ENCODE measurements at regions of chr5 and their contacts with region 1.

Region 1: GRCh38 chr5:72847989-72848473 is 31.6 kb downstream of the TNPO1 start:
- DNase-seq: peak; percentile 59 to 91 (median 82)
- ATAC-seq: peak; percentile 81
- H3K4me3 ChIP-seq: peak overlapping the region; percentile 84 to 89
- H3K4me3 Mint-ChIP-seq: peak overlapping the region; percentile 99
- H3K27ac ChIP-seq: peak overlapping the region; percentile 79 to 81
- H3K27ac Mint-ChIP-seq: peak overlapping the region; percentile 98
- H3K4me1 ChIP-seq: peaks cover 29% of the 10 kb centered on the region
- H3K4me1 Mint-ChIP-seq: peaks cover 61% of the 10 kb centered on the region
- H3K27me3 ChIP-seq: no peaks in the 10 kb centered on the region
- H3K27me3 Mint-ChIP-seq: no peaks in the 10 kb centered on the region
- CTCF ChIP-seq: no peak

Region 2: DNA sequence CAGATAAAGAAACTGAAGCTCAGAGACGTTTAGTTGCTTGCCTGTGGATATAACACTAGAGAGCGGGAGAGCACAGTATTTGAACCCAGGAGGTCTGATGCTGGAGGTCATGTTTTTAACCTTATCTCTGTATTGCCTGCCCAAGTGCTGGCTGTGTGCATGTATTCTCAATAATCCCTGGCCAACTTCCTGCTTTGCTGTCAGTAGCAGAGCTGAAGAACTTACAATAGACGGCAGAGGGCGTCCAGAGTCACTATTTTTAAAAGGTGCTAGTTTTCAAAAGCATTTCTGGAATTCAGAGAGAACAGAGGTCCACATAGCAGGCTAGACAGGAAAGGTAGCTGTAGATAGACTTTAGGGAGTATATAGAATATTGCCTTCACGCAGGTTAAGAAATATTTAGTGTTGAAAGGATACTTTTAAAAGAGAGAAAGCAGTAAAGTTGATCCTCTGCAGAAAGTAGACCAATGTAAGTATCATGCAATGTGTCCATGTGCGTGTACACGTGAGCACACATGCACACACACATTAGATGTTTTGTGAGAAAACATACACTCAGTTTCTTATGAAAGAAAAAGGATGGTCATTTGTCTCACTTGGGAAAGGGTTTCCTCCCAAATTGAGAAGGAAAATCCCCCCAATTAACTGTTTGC is 481.6 kb before region 1 on chr5:
- CTCF ChIA-PET with region 1: no interaction called
- POLR2A ChIA-PET with region 1: no interaction called
- intact Hi-C with region 1: loop called in 1 of 2 experiments (anchors 10 kb)
- DNase-seq: peak in 5 of 9 experiments; percentile 1 to 49 (median 14)
- ATAC-seq: peak; percentile 44
- H3K4me3 ChIP-seq: no peak overlapping the region
- H3K4me3 Mint-ChIP-seq: no peak overlapping the region
- H3K27ac ChIP-seq: no peak overlapping the region
- H3K27ac Mint-ChIP-seq: no peak overlapping the region
- H3K4me1 ChIP-seq: no peaks in the 10 kb centered on the region
- H3K4me1 Mint-ChIP-seq: no peaks in the 10 kb centered on the region
- H3K27me3 ChIP-seq: no peaks in the 10 kb centered on the region
- H3K27me3 Mint-ChIP-seq: no peaks in the 10 kb centered on the region
- CTCF ChIP-seq: no peak

Region 3: GRCh38 chr5:72611118-72611730 is 236.8 kb before region 1 on chr5:
- CTCF ChIA-PET with region 1: no interaction called
- POLR2A ChIA-PET with region 1: no interaction called
- intact Hi-C with region 1: loop called in 1 of 2 experiments (anchors 10 kb)
- DNase-seq: peak; percentile 1 to 56 (median 34)
- ATAC-seq: peak; percentile 62
- H3K4me3 ChIP-seq: no peak overlapping the region
- H3K4me3 Mint-ChIP-seq: no peak overlapping the region
- H3K27ac ChIP-seq: no peak overlapping the region
- H3K27ac Mint-ChIP-seq: no peak overlapping the region
- H3K4me1 ChIP-seq: no peaks in the 10 kb centered on the region
- H3K4me1 Mint-ChIP-seq: no peaks in the 10 kb centered on the region
- H3K27me3 ChIP-seq: no peaks in the 10 kb centered on the region
- H3K27me3 Mint-ChIP-seq: peaks cover 10% of the 10 kb centered on the region
- CTCF ChIP-seq: peak; percentile 74

Region 4: DNA sequence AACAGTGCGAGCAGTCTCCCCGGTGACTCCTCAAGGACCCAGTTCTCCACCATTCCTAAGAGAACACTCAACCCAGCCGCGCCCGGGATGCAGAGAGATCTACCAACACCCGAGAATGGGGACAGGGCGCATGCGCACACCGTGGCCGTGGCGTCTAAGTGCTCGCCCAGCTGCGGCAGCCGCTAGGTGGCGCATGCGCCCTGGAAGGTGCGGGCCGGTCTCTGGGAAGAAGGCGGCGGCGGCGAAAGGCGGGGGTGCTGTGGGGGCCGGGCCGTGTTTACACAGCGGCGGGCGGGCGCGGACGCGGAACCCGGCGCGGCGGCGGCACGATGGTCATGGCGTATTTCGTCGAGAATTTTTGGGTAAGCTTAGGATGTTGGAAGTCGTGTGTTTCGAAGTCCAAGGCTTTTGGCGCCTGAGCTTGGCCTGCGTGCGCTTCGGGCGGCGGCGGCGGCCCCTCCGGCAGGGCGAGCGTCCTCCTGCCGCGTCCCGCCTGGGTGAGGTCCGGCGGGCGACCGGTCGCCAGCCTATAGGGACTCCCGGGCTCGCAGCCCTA is 107.8 kb after region 1 on chr5 and contains the start of gene FCHO2:
- CTCF ChIA-PET with region 1: no interaction called
- POLR2A ChIA-PET with region 1: no interaction called
- intact Hi-C with region 1: loop called (anchors 5 kb)
- DNase-seq: peak; percentile 88 to 98 (median 96)
- ATAC-seq: peak; percentile 90
- H3K4me3 ChIP-seq: peak within 1 kb of the TSS; percentile 61 to 95
- H3K4me3 Mint-ChIP-seq: peak within 1 kb of the TSS; percentile 95
- H3K27ac ChIP-seq: no peak within 1 kb of the TSS
- H3K27ac Mint-ChIP-seq: peak within 1 kb of the TSS; percentile 88
- H3K4me1 ChIP-seq: peaks cover 12% of the 10 kb centered on the region
- H3K4me1 Mint-ChIP-seq: peaks cover 15% of the 10 kb centered on the region
- H3K27me3 ChIP-seq: peaks cover 6 to 9% of the 10 kb centered on the region in 2 experiments
- H3K27me3 Mint-ChIP-seq: peaks cover 41% of the 10 kb centered on the region
- CTCF ChIP-seq: peak; percentile 65
- total RNA-seq, gene FCHO2: 2.4 to 2.9 TPM

Measured in CD8-positive, alpha-beta T cell (primary cell).